Heart left ventricle (tissue), 16 donors: ENCODE measurements at regions of chr5 and their contacts with region 1.

Region 1: DNA sequence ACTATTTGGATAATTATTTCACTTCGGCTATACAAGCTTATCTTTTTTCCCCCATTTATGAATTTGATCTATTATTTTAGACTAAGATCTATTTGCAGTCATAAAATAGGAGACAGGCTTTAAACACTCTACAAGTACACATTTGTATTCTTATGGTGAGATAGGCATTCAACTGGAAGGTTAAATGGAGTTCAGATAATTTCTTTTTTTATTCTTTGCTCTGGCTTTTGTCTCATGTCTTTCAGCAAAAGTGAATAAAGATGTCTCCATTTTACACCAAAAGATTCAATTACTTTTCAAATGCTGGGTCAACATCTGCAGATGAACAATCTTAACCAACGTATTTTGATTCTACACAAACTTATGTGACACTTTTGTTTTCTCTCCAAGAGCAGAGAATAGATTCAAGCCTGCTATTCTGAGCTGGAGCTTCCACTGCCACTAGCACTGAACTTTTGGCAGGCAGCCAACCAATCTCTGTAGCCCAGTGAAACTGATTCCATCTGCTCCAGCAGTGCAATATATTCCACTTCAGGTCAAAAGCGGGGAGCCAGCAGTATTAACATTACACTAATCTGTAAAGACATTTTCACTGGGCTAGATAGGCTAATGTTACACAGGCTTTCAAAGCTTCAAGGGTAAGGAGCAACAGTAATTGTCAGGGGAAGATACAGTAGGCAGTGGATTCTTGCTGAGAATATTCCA is 452.0 kb upstream of the ZNF608 start:
- DNase-seq: peak; percentile 65 to 91 (median 86)
- ATAC-seq: peak in 3 of 4 donors; percentile 68 to 76 (median 69)
- H3K4me3 ChIP-seq: no peak overlapping the region
- H3K27ac ChIP-seq: peak overlapping the region in 9 of 12 donors; percentile 8 to 74 (median 28)
- H3K4me1 ChIP-seq: peaks cover 0 to 35% (median 4%) of the 10 kb centered on the region in 12 donors
- H3K27me3 ChIP-seq: no peaks in the 10 kb centered on the region
- CTCF ChIP-seq: no peak
- POLR2A ChIP-seq: no peak

Region 2: GRCh38 chr5:125043781-125044391 is 154.5 kb before region 1 on chr5:
- intact Hi-C with region 1: loop called in 2 of 10 experiments (anchors 5 to 10 kb)
- DNase-seq: peak; percentile 76 to 90 (median 86)
- ATAC-seq: peak; percentile 94 to 97 (median 96)
- H3K4me3 ChIP-seq: no peak overlapping the region
- H3K27ac ChIP-seq: peak overlapping the region in 5 of 12 donors; percentile 7 to 55 (median 28)
- H3K4me1 ChIP-seq: peaks cover 0 to 34% (median 25%) of the 10 kb centered on the region in 12 donors
- H3K27me3 ChIP-seq: no peaks in the 10 kb centered on the region
- CTCF ChIP-seq: no peak
- POLR2A ChIP-seq: no peak